ENCODE measurements at regions of chr13 and their contacts with region 1.

Region 1: GRCh38 chr13:45393941-45394570 is 24.1 kb downstream of the SLC25A30 start:
- DNase-seq: peak; percentile 81
- H3K4me3 ChIP-seq: no peak overlapping the region
- H3K27ac ChIP-seq: no peak overlapping the region
- H3K4me1 ChIP-seq: no peaks in the 10 kb centered on the region; a peak in 1 of 4 replicates
- H3K27me3 ChIP-seq: no peaks in the 10 kb centered on the region
- CTCF ChIP-seq: peak; percentile 79
- EP300 ChIP-seq: no peak
- RAD21 ChIP-seq: peak; percentile 73

Region 2: GRCh38 chr13:45340422-45340925 is 53.6 kb before region 1 on chr13:
- CTCF ChIA-PET with region 1: interaction called, 16 read pairs
- POLR2A ChIA-PET with region 1: interaction called, 3 read pairs
- DNase-seq: peak; percentile 78
- H3K4me3 ChIP-seq: peak overlapping the region; percentile 68 to 99
- H3K27ac ChIP-seq: peak overlapping the region; percentile 95 to 98
- H3K4me1 ChIP-seq: peaks cover 10 to 35% of the 10 kb centered on the region in 2 experiments; a peak in 3 of 4 replicates
- H3K27me3 ChIP-seq: no peaks in the 10 kb centered on the region
- CTCF ChIP-seq: peak; percentile 51
- EP300 ChIP-seq: no peak
- RAD21 ChIP-seq: peak; percentile 36; the same call in 1 of the 2 replicates

Region 3: DNA sequence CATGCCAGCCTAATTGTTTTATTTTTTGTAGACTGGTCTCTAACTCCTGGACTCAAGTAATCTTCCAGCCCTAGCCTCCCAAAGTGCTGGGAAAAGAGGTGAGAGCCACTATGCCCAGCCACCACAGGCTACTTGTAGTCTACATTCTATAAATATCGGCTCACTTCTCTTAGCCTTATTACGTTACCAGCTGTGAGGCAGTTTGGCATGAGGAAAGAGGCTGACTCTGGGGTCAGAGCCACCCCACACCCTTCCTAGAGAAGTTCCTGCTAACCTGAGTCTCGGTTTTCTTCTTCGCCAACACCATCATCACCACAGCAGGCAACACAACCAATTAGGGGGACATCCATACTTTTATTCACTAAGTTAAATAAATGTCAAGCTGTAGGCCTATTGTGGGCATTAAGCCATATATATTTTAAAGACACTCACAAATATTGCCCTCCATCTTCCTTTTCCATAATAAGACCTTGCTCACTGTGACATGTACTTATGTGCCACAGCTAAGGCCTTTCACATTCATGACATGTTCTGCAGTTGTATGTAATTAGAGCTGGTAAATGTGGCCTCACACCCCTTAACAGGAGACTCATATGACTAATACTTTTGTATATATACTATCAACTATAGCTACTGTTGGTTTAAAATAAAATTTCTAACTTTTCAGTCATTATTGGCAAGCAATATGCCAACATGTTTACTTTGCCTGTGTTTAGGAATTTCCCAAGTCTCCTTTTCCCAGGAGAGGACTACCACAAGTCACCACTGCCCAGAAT is 18.4 kb after region 1 on chr13:
- CTCF ChIA-PET with region 1: interaction called, 19 read pairs
- POLR2A ChIA-PET with region 1: no interaction called
- DNase-seq: no peak
- H3K4me3 ChIP-seq: no peak overlapping the region
- H3K27ac ChIP-seq: no peak overlapping the region
- H3K4me1 ChIP-seq: peaks cover 0 to 9% of the 10 kb centered on the region in 2 experiments; a peak in 1 of 4 replicates
- H3K27me3 ChIP-seq: no peaks in the 10 kb centered on the region
- CTCF ChIP-seq: no peak
- EP300 ChIP-seq: no peak
- RAD21 ChIP-seq: no peak

Region 4: GRCh38 chr13:45417790-45418534 is 23.9 kb after region 1 on chr13 and contains the start of gene SLC25A30:
- CTCF ChIA-PET with region 1: interaction called, 19 read pairs
- POLR2A ChIA-PET with region 1: no interaction called
- DNase-seq: peak; percentile 94
- H3K4me3 ChIP-seq: peak within 1 kb of the TSS; percentile 69 to 97
- H3K27ac ChIP-seq: peak within 1 kb of the TSS; percentile 68 to 82
- H3K4me1 ChIP-seq: peaks cover 0 to 5% of the 10 kb centered on the region in 2 experiments; a peak in 2 of 4 replicates
- H3K27me3 ChIP-seq: no peaks in the 10 kb centered on the region
- CTCF ChIP-seq: no peak
- EP300 ChIP-seq: no peak
- RAD21 ChIP-seq: no peak
- polyA plus RNA-seq, gene SLC25A30: 9.6 and 13.9 TPM in 2 replicates

Measured in SK-N-SH (cell line).